AG04450 (cell line): ENCODE measurements at regions of chr1 and their contacts with region 1.

Region 1: GRCh38 chr1:173224280-173224892 is 17.3 kb upstream of the TNFSF4 start:
- DNase-seq: no peak
- H3K4me3 ChIP-seq: no peak overlapping the region
- H3K27ac ChIP-seq: no peak overlapping the region
- H3K27me3 ChIP-seq: no peaks in the 10 kb centered on the region
- CTCF ChIP-seq: no peak

Region 2: DNA sequence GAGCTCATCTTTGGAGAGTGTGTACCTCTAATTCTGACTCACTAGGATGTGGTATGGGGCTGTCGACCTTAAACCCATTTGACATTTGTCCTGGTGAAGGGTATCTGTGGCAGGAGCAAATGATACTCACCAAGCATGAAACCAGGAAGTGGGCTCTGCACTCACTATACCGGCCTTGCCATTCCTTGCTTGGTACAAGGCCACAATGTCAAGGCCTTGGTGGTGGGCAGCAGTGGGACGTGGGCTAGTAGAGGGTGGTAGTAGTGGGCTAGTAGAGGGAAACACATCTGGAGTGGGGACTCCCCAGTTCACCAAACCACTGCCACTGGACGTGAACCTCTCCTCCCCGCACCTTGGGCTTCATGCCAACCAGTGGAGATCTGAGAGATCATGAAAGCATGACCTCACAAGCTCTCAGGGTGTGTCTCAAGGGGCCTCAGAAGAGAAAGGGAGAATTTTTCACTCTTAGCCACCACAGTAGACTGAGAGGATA is 28.7 kb before region 1 on chr1:
- CTCF ChIA-PET with region 1: no interaction called
- POLR2A ChIA-PET with region 1: no interaction called
- DNase-seq: no peak
- H3K4me3 ChIP-seq: no peak overlapping the region
- H3K27ac ChIP-seq: no peak overlapping the region
- H3K27me3 ChIP-seq: no peaks in the 10 kb centered on the region
- CTCF ChIP-seq: no peak

Region 3: DNA sequence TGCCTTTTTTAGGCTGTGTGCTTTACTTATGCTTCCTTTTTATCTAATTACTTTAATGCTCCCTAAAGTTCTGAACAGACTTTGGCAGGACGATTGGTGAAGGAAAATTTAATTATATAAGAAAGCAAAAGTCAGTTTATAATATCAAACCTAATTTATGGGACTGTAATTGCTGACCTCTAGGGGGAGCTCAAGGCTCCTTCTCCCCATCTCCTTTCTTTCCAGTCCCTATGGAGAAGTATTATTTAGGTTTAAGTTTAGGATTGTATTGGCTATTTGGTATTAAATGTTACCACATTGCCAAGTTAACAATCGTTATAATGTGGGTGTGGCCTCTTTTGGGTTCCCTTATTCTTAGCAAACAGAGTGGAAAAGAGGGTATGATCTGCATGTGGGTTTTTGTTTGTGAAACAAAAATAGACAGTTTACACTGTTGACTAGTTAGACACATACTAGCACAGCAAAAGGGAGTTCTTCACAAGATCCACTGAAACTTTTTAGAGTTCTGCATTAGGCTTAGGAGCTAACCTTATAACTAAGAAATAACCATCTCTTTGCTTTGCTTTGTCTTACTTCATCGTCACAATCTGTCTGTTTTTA is 30.9 kb after region 1 on chr1:
- CTCF ChIA-PET with region 1: interaction called, 11 read pairs
- POLR2A ChIA-PET with region 1: no interaction called
- DNase-seq: peak; percentile 13
- H3K4me3 ChIP-seq: no peak overlapping the region
- H3K27ac ChIP-seq: no peak overlapping the region
- H3K27me3 ChIP-seq: no peaks in the 10 kb centered on the region
- CTCF ChIP-seq: peak; percentile 80